CD4-positive, alpha-beta memory T cell (primary cell): ENCODE measurements at regions of chr10 and their contacts with region 1.

Region 1: DNA sequence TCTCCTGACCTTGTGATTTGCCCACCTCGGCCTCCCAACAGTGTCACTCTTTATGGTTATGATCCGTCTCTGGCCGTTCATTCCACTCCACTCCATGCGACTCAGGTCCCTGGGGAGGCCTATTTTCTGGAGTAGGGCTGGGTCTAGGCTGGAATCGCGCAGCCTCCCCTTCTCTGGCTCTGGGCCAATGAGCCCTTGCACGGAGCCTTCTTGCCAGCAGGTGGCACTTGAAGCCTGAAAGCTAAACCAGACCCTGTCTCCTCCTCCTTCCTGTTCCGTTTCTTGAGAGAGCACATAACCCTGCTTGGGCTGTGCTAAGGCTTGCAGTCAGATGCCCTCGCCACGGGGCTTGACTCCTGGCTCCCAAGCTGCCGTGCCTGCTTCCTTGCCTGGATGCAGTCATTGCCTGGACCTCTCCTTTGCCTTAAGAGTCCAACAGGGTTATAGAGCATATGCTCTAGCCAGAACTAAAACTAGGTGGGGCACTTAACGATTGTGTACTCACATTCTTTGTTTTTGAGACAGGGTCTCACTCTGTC is 9.6 kb upstream of the DNAJB12 start:
- DNase-seq: peak; percentile 85 to 87 (median 86)
- H3K4me3 ChIP-seq: peak overlapping the region in 1 of 2 donors; percentile 31
- H3K4me3 Mint-ChIP-seq: peak overlapping the region in 6 of 8 donors; percentile 5 to 64 (median 44)
- H3K27ac ChIP-seq: peak overlapping the region; percentile 43
- H3K27ac Mint-ChIP-seq: peak overlapping the region; percentile 56 to 92 (median 87)
- H3K4me1 ChIP-seq: peaks cover 22% of the 10 kb centered on the region
- H3K4me1 Mint-ChIP-seq: peaks cover 8 to 40% (median 24%) of the 10 kb centered on the region in 4 donors
- H3K27me3 ChIP-seq: no peaks in the 10 kb centered on the region
- H3K27me3 Mint-ChIP-seq: no peaks in the 10 kb centered on the region

Region 2: DNA sequence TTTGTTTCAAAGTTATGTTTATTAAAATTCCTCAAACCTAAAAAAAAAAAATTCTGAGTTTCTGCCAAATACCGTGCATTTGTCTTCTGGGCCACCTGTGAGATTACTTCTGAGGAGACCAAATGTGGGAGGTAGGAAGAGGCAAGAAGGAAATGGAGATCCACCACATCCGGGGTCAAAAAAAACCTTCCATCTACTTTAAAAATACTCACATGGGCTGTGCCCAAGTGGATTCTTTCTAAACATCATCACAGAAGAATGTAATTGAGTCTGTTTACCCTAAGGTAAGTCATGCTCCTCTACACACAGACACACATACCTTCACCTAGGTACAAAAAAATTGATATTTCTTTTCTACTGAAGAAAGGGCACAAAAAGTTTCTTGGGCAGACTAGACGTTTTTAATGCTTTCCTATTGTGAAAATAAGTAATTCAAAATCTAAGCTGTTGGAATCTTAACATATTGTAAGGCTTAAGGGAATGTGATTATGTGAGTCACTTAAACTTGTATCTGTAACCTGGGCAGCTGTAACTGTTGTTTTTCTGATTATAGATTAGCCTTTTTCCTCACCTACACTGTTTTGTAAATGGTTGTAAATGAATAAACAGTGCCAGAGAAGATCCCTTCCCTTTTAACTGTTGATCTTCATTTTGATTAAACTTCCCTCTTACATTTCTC is 256.8 kb before region 1 on chr10:
- CTCF ChIA-PET with region 1: no interaction called
- POLR2A ChIA-PET with region 1: no interaction called
- intact Hi-C with region 1: no loop called
- DNase-seq: peak; percentile 62 to 72 (median 71)
- H3K4me3 ChIP-seq: peak overlapping the region in 1 of 2 donors; percentile 16
- H3K4me3 Mint-ChIP-seq: peak overlapping the region; percentile 61 to 87 (median 81)
- H3K27ac ChIP-seq: peak overlapping the region; percentile 53
- H3K27ac Mint-ChIP-seq: peak overlapping the region; percentile 81 to 97 (median 90)
- H3K4me1 ChIP-seq: peaks cover 78% of the 10 kb centered on the region
- H3K4me1 Mint-ChIP-seq: peaks cover 61 to 91% (median 80%) of the 10 kb centered on the region in 4 donors
- H3K27me3 ChIP-seq: no peaks in the 10 kb centered on the region
- H3K27me3 Mint-ChIP-seq: no peaks in the 10 kb centered on the region

Region 3: DNA sequence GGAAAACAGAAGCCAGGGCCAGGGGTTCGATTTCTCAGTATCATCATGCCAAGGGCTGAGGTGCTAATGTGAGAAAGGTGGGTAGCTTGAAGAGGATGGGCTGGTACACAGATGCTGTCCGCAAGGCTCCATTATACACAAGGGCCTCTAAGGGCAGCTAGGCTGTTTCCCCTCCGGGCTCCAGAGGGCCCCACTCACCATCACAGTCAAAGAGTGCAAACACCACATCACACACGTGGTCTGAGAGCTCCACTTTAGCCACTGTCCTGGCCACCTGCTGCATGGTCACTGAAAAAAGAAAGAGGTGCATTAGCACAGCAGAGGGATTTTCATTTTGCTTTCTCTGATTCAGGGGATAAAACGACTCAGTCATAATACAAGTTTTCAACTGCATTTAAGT is 11.3 kb after region 1 on chr10:
- CTCF ChIA-PET with region 1: interaction called, 22 read pairs
- POLR2A ChIA-PET with region 1: interaction called, 3 read pairs
- intact Hi-C with region 1: no loop called
- DNase-seq: no peak
- H3K4me3 ChIP-seq: no peak overlapping the region
- H3K4me3 Mint-ChIP-seq: no peak overlapping the region
- H3K27ac ChIP-seq: no peak overlapping the region
- H3K27ac Mint-ChIP-seq: peak overlapping the region in 2 of 7 donors; percentile 0 to 29
- H3K4me1 ChIP-seq: peaks cover 16% of the 10 kb centered on the region
- H3K4me1 Mint-ChIP-seq: peaks cover under 1 to 4% (median 3%) of the 10 kb centered on the region in 4 donors
- H3K27me3 ChIP-seq: no peaks in the 10 kb centered on the region
- H3K27me3 Mint-ChIP-seq: no peaks in the 10 kb centered on the region

Region 4: GRCh38 chr10:72435570-72435969 is 71.3 kb after region 1 on chr10:
- CTCF ChIA-PET with region 1: no interaction called
- POLR2A ChIA-PET with region 1: no interaction called
- intact Hi-C with region 1: no loop called
- DNase-seq: no peak
- H3K4me3 ChIP-seq: no peak overlapping the region
- H3K4me3 Mint-ChIP-seq: no peak overlapping the region
- H3K27ac ChIP-seq: no peak overlapping the region
- H3K27ac Mint-ChIP-seq: peak overlapping the region in 1 of 7 donors; percentile 57
- H3K4me1 ChIP-seq: no peaks in the 10 kb centered on the region
- H3K4me1 Mint-ChIP-seq: no peaks in the 10 kb centered on the region
- H3K27me3 ChIP-seq: no peaks in the 10 kb centered on the region
- H3K27me3 Mint-ChIP-seq: no peaks in the 10 kb centered on the region

Region 5: GRCh38 chr10:72692057-72692910 is 328.0 kb after region 1 on chr10 and contains the start of gene MCU:
- CTCF ChIA-PET with region 1: interaction called, 4 read pairs
- POLR2A ChIA-PET with region 1: no interaction called
- intact Hi-C with region 1: loop called (anchors 2 kb)
- DNase-seq: peak; percentile 91 to 95 (median 93)
- H3K4me3 ChIP-seq: peak within 1 kb of the TSS; percentile 49 to 69
- H3K4me3 Mint-ChIP-seq: peak within 1 kb of the TSS; percentile 86 to 93 (median 90)
- H3K27ac ChIP-seq: peak within 1 kb of the TSS; percentile 61
- H3K27ac Mint-ChIP-seq: peak within 1 kb of the TSS; percentile 78 to 90 (median 87)
- H3K4me1 ChIP-seq: peaks cover 25% of the 10 kb centered on the region
- H3K4me1 Mint-ChIP-seq: peaks cover 27 to 41% (median 32%) of the 10 kb centered on the region in 4 donors
- H3K27me3 ChIP-seq: no peaks in the 10 kb centered on the region
- H3K27me3 Mint-ChIP-seq: peaks cover 0 to 4% of the 10 kb centered on the region in 2 donors
- total RNA-seq, gene MCU: 12.1 to 16.4 TPM

Region 6: DNA sequence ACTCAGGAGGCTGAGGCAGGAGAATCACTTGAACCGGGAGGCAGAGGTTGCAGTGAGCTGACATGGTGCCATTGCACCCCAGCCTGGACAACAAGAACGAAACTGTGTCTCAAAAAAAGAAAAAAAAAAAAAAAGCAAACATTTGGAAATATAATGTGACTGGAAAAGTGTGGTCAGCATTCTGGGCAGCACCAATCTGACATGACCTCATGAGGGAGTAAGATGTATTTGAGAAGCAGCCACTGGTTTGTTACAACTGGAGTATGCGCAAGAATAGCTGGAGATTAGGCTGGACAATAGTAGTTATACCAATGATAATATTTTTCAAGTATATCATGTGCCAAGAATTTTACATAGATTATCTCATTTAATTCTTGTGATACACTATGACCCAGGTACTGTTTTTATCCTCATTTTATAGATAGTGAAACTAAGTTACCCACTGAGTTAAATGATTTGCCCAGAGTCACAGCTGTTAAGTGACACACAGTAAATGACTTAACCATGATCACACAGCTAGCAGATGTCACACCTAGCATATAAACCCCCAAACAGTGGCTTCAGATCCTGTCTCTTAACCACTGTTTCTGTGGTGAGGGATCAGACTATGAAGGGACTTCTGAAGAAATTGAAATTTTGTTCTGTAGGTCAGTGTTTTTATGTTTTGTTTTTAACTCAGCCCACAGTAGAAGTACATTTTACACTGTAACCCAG is 338.7 kb after region 1 on chr10:
- CTCF ChIA-PET with region 1: no interaction called
- POLR2A ChIA-PET with region 1: no interaction called
- intact Hi-C with region 1: no loop called
- DNase-seq: no peak
- H3K4me3 ChIP-seq: no peak overlapping the region
- H3K4me3 Mint-ChIP-seq: no peak overlapping the region
- H3K27ac ChIP-seq: no peak overlapping the region
- H3K27ac Mint-ChIP-seq: peak overlapping the region in 1 of 7 donors; percentile 41
- H3K4me1 ChIP-seq: no peaks in the 10 kb centered on the region
- H3K4me1 Mint-ChIP-seq: peaks cover 5 to 8% (median 6%) of the 10 kb centered on the region in 4 donors
- H3K27me3 ChIP-seq: no peaks in the 10 kb centered on the region
- H3K27me3 Mint-ChIP-seq: no peaks in the 10 kb centered on the region

Region 7: DNA sequence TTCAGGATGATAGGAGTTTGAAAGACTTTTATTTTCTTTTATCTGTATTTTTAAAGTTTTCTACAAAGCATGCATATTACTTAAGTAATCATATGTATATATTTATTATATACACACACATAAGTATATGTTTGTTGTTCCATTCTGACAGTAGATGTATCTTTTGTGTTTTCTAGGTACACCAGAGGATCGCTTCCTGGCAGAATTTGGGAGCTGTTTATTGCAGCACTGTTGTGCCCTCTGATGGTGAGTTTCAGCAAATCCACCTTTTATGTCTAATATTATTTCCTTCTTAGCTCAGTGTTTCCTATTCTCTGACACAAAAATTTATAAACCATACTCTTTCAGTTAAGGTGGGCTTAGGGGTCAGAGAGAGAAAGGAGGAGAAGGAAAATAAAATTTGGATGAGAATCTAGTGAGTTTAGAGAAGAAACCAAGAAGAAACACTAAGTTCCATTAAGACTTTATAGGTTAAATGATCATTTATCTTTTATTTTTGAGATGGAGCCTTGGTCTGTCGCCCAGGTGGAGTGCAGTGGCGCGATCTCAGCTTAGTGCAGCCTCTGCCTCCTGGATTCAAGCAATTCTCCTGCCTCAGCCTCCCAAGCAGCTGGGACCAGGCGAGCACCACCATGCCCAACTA is 470.0 kb after region 1 on chr10:
- CTCF ChIA-PET with region 1: interaction called, 110 read pairs
- POLR2A ChIA-PET with region 1: interaction called, 14 read pairs
- intact Hi-C with region 1: no loop called
- DNase-seq: peak; percentile 46 to 57 (median 55)
- H3K4me3 ChIP-seq: no peak overlapping the region
- H3K4me3 Mint-ChIP-seq: no peak overlapping the region
- H3K27ac ChIP-seq: no peak overlapping the region
- H3K27ac Mint-ChIP-seq: no peak overlapping the region
- H3K4me1 ChIP-seq: no peaks in the 10 kb centered on the region
- H3K4me1 Mint-ChIP-seq: peaks cover 1 to 6% (median 4%) of the 10 kb centered on the region in 4 donors
- H3K27me3 ChIP-seq: no peaks in the 10 kb centered on the region
- H3K27me3 Mint-ChIP-seq: no peaks in the 10 kb centered on the region

Region 8: GRCh38 chr10:73060738-73061635 is 696.7 kb after region 1 on chr10:
- CTCF ChIA-PET with region 1: interaction called, 8 read pairs
- POLR2A ChIA-PET with region 1: interaction called, 3 read pairs
- intact Hi-C with region 1: loop called (anchors 1 kb)
- DNase-seq: peak in 4 of 5 donors; percentile 20 to 37 (median 29)
- H3K4me3 ChIP-seq: no peak overlapping the region
- H3K4me3 Mint-ChIP-seq: no peak overlapping the region
- H3K27ac ChIP-seq: no peak overlapping the region
- H3K27ac Mint-ChIP-seq: peak overlapping the region in 4 of 7 donors; percentile 13 to 82 (median 50)
- H3K4me1 ChIP-seq: peaks cover 9% of the 10 kb centered on the region
- H3K4me1 Mint-ChIP-seq: peaks cover 9 to 13% (median 10%) of the 10 kb centered on the region in 4 donors
- H3K27me3 ChIP-seq: no peaks in the 10 kb centered on the region
- H3K27me3 Mint-ChIP-seq: no peaks in the 10 kb centered on the region